Calu3 (cell line): ENCODE measurements at regions of chr5 and their contacts with region 1.

Region 1: DNA sequence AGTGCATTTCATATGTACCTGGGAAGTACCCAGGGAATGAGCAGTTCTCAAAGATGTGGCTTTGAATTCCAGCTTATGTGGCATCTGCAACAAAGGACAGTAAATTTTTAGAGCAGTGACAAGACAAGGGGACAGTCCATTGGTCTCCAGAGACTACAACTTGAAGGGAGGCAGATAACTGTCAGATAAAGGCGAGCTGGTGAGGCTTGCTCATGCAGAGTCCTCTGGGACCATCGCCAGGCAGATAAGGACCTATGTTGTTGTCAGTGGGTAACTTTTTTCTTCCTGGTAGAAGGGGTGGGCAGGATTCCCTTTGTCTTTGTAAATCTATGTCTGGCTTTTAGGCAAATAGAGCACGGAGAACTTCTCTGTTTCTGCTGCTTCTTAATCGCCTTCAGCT is 120.2 kb downstream of the ICE1 start:
- DNase-seq: no peak
- H3K4me3 Mint-ChIP-seq: no peak overlapping the region
- H3K27ac Mint-ChIP-seq: no peak overlapping the region
- H3K4me1 Mint-ChIP-seq: no peaks in the 10 kb centered on the region
- H3K27me3 Mint-ChIP-seq: no peaks in the 10 kb centered on the region
- CTCF ChIP-seq: no peak

Region 2: GRCh38 chr5:5558638-5559037 is 16.0 kb after region 1 on chr5:
- CTCF ChIA-PET with region 1: no interaction called
- intact Hi-C with region 1: loop called (anchors 1 kb)
- DNase-seq: no peak
- H3K4me3 Mint-ChIP-seq: no peak overlapping the region
- H3K27ac Mint-ChIP-seq: no peak overlapping the region
- H3K4me1 Mint-ChIP-seq: no peaks in the 10 kb centered on the region
- H3K27me3 Mint-ChIP-seq: no peaks in the 10 kb centered on the region
- CTCF ChIP-seq: no peak